ENCODE measurements at regions of chr22 and their contacts with region 1.

Region 1: GRCh38 chr22:46843821-46844255 is 81.4 kb downstream of the TBC1D22A start:
- DNase-seq: peak; percentile 35 to 44
- ATAC-seq: peak; percentile 58 to 86
- H3K4me3 ChIP-seq: no peak overlapping the region
- H3K27ac ChIP-seq: peak overlapping the region in 1 of 4 donors; percentile 45
- H3K4me1 ChIP-seq: peaks cover 7 to 25% of the 10 kb centered on the region in 2 donors
- H3K27me3 ChIP-seq: no peaks in the 10 kb centered on the region
- CTCF ChIP-seq: no peak
- POLR2A ChIP-seq: no peak

Region 2: GRCh38 chr22:46934746-46935491 is 91.1 kb after region 1 on chr22:
- in situ Hi-C with region 1: no loop called
- intact Hi-C with region 1: loop called (anchors 5 kb)
- DNase-seq: peak; percentile 52 to 68
- ATAC-seq: peak; percentile 89 to 94
- H3K4me3 ChIP-seq: no peak overlapping the region
- H3K27ac ChIP-seq: peak overlapping the region; percentile 64 to 79 (median 71)
- H3K4me1 ChIP-seq: peaks cover 23 to 25% of the 10 kb centered on the region in 2 donors
- H3K27me3 ChIP-seq: no peaks in the 10 kb centered on the region
- CTCF ChIP-seq: no peak
- POLR2A ChIP-seq: no peak